Lower leg skin (tissue), 4 donors: ENCODE measurements at regions of chr16 and their contacts with region 1.

Region 1: DNA sequence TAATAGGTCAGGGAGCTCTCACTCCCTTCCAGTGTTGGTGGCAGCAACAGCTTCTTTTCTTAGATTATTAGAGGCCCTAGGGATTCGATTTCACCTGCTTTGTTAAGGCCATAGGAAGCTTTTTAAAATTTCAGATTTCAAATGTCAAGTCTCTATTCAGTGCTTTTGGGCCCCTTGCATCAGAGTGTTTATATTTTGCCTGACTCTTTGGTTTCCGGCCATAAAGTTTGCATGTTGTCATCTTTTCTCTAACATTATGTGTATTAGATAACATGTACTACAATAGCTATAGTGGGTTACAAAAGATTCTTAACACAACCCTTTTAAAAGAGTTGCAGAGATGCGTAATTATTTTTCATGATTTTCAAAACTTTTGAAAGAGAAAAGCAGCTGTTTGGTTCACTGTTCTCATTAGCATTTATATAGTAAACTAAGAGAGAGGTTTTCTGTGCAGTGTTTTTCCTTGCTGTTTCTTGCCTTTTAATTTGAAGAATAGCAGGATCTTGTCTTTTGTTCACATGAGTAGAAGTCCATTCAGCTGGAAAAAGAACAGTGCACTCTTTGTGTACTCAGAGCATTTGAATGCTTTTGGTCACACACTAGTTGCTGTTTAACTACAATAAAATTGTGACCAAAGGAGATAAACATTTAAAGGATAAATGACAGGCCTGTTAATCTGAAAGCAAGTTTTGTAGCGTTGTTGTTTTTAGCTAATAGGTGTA is 52.5 kb downstream of the FTO start:
- DNase-seq: no peak
- H3K4me3 ChIP-seq: no peak overlapping the region
- CTCF ChIP-seq: no peak
- POLR2A ChIP-seq: no peak

Region 2: GRCh38 chr16:53814811-53815210 is 58.4 kb after region 1 on chr16:
- intact Hi-C with region 1: loop called (anchors 2 kb)
- DNase-seq: no peak
- H3K4me3 ChIP-seq: no peak overlapping the region
- CTCF ChIP-seq: no peak
- POLR2A ChIP-seq: no peak

Region 3: DNA sequence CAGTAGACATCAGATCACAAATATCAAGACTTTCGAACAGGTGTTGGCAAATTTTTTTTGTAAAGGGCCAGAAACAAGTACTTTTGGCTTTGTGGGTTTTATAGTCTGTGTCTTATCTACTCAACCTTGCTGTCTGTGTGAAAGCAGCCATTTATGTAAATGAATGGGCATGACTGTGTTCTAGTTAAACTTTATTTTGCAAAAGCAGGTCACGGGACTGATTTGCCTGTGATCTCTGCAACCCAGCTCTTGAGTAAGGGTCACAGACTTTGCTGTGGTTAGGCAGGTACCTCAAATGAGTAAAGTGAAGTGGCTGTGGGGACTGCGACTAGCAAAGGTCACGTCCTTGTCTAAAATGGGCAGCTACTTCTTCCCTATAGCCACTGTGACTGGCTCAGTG is 84.0 kb after region 1 on chr16:
- intact Hi-C with region 1: no loop called
- DNase-seq: no peak
- H3K4me3 ChIP-seq: no peak overlapping the region
- CTCF ChIP-seq: no peak
- POLR2A ChIP-seq: no peak